CD4-positive, alpha-beta T cell (primary cell): ENCODE measurements at regions of chr9 and their contacts with region 1.

Region 1: GRCh38 chr9:22244141-22245011 is 202.2 kb upstream of the DMRTA1 start:
- DNase-seq: peak in 4 of 14 experiments; percentile 8 to 67 (median 58)
- ATAC-seq: no peak
- H3K4me3 ChIP-seq: no peak overlapping the region
- H3K4me3 Mint-ChIP-seq: no peak overlapping the region
- H3K27ac ChIP-seq: no peak overlapping the region
- H3K27ac Mint-ChIP-seq: no peak overlapping the region
- H3K4me1 ChIP-seq: no peaks in the 10 kb centered on the region
- H3K4me1 Mint-ChIP-seq: peaks cover 4% of the 10 kb centered on the region
- H3K27me3 ChIP-seq: no peaks in the 10 kb centered on the region
- H3K27me3 Mint-ChIP-seq: peaks cover 15% of the 10 kb centered on the region
- CTCF ChIP-seq: peak; percentile 53

Region 2: DNA sequence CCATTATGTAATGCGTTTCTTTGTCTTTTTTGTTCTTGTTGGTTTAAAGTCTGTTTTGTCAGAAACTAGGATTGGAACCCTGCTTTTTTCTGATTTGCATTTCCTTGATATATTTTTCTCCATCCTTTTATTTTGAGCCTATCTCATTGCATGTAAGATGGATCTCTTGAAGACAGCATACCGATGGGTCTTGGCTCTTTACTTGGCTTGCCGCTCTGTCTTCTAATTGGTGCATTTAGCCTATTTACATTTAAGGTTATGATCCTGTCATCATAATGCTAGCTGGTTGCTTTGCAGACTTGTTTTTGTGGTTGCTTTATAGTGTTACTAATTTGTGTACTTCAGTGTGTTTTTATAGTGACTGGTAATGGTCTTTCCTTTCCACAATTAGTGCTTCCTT is 222.0 kb before region 1 on chr9:
- CTCF ChIA-PET with region 1: no interaction called
- POLR2A ChIA-PET with region 1: no interaction called
- intact Hi-C with region 1: no loop called
- DNase-seq: no peak
- ATAC-seq: no peak
- H3K4me3 ChIP-seq: no peak overlapping the region
- H3K4me3 Mint-ChIP-seq: no peak overlapping the region
- H3K27ac ChIP-seq: no peak overlapping the region
- H3K27ac Mint-ChIP-seq: no peak overlapping the region
- H3K4me1 ChIP-seq: no peaks in the 10 kb centered on the region
- H3K4me1 Mint-ChIP-seq: no peaks in the 10 kb centered on the region
- H3K27me3 ChIP-seq: peaks cover 3 to 6% of the 10 kb centered on the region in 2 experiments
- H3K27me3 Mint-ChIP-seq: peaks cover 51% of the 10 kb centered on the region
- CTCF ChIP-seq: no peak

Region 3: DNA sequence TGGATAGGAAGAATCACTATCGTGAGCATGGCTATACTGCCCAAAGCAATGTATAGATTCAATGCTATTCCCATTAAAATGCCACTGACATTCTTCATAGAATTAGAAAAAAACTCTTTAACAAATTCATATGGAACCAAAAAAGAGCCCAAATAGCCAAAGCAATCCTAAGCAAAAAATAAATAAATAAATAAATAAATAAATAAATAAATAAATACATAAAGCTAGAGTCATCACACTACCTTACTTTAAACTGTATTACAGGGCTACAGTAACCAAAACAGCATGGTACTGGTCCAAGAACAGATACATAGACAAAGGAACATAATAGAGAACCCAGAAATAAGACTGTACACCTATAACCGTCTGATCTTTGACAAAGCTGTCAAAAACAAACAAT is 54.9 kb before region 1 on chr9:
- CTCF ChIA-PET with region 1: no interaction called
- POLR2A ChIA-PET with region 1: no interaction called
- intact Hi-C with region 1: loop called in 1 of 2 experiments (anchors 10 kb)
- DNase-seq: no peak
- ATAC-seq: no peak
- H3K4me3 ChIP-seq: no peak overlapping the region
- H3K4me3 Mint-ChIP-seq: no peak overlapping the region
- H3K27ac ChIP-seq: no peak overlapping the region
- H3K27ac Mint-ChIP-seq: no peak overlapping the region
- H3K4me1 ChIP-seq: no peaks in the 10 kb centered on the region
- H3K4me1 Mint-ChIP-seq: no peaks in the 10 kb centered on the region
- H3K27me3 ChIP-seq: no peaks in the 10 kb centered on the region
- H3K27me3 Mint-ChIP-seq: no peaks in the 10 kb centered on the region
- CTCF ChIP-seq: no peak

Region 4: GRCh38 chr9:22452415-22453010 is 208.1 kb after region 1 on chr9:
- CTCF ChIA-PET with region 1: no interaction called
- POLR2A ChIA-PET with region 1: no interaction called
- intact Hi-C with region 1: loop called in 1 of 2 experiments (anchors 5 kb)
- DNase-seq: peak in 13 of 14 experiments; percentile 10 to 62 (median 20)
- ATAC-seq: peak; percentile 44
- H3K4me3 ChIP-seq: no peak overlapping the region
- H3K4me3 Mint-ChIP-seq: no peak overlapping the region
- H3K27ac ChIP-seq: no peak overlapping the region
- H3K27ac Mint-ChIP-seq: no peak overlapping the region
- H3K4me1 ChIP-seq: peaks cover 3% of the 10 kb centered on the region
- H3K4me1 Mint-ChIP-seq: no peaks in the 10 kb centered on the region
- H3K27me3 ChIP-seq: peaks cover 7 to 31% of the 10 kb centered on the region in 2 experiments
- H3K27me3 Mint-ChIP-seq: peaks cover 56% of the 10 kb centered on the region
- CTCF ChIP-seq: peak; percentile 80